CD8-positive, alpha-beta T cell (primary cell): ENCODE measurements at regions of chr17 and their contacts with region 1.

Region 1: GRCh38 chr17:8785547-8786413 is 13.4 kb downstream of the MFSD6L start:
- DNase-seq: peak; percentile 27 to 73 (median 60)
- ATAC-seq: peak; percentile 56
- H3K4me3 ChIP-seq: no peak overlapping the region
- H3K4me3 Mint-ChIP-seq: no peak overlapping the region
- H3K27ac ChIP-seq: no peak overlapping the region
- H3K27ac Mint-ChIP-seq: no peak overlapping the region
- H3K4me1 ChIP-seq: no peaks in the 10 kb centered on the region
- H3K4me1 Mint-ChIP-seq: no peaks in the 10 kb centered on the region
- H3K27me3 ChIP-seq: peaks cover 0 to 2% of the 10 kb centered on the region in 2 experiments
- H3K27me3 Mint-ChIP-seq: no peaks in the 10 kb centered on the region
- CTCF ChIP-seq: peak; percentile 83

Region 2: DNA sequence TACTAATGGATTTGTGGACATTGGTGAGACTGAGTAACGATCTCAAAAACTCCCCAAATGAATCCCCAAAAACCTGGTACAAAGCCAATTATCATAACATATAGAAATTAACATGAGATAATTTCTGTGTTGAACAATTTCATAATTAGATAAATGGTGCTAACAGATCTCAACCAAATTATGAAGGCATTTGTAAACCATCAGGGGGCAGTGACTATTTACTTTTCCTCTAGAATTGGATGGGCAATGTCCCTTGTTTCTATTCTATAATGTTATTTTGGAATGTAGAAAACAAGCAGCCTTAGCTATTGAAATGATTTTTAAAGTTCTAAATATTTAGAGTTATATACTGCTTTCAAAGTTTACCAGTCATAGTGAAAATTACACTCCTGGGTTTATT is 213.0 kb before region 1 on chr17:
- CTCF ChIA-PET with region 1: interaction called, 3 read pairs
- POLR2A ChIA-PET with region 1: no interaction called
- intact Hi-C with region 1: loop called in 1 of 2 experiments (anchors 10 kb)
- DNase-seq: peak in 2 of 9 experiments; percentile 3 to 20
- ATAC-seq: no peak
- H3K4me3 ChIP-seq: no peak overlapping the region
- H3K4me3 Mint-ChIP-seq: no peak overlapping the region
- H3K27ac ChIP-seq: no peak overlapping the region
- H3K27ac Mint-ChIP-seq: no peak overlapping the region
- H3K4me1 ChIP-seq: no peaks in the 10 kb centered on the region
- H3K4me1 Mint-ChIP-seq: no peaks in the 10 kb centered on the region
- H3K27me3 ChIP-seq: no peaks in the 10 kb centered on the region
- H3K27me3 Mint-ChIP-seq: peaks cover 3% of the 10 kb centered on the region
- CTCF ChIP-seq: no peak

Region 3: GRCh38 chr17:8727065-8727511 is 58.7 kb before region 1 on chr17:
- CTCF ChIA-PET with region 1: no interaction called
- POLR2A ChIA-PET with region 1: no interaction called
- intact Hi-C with region 1: no loop called
- DNase-seq: no peak
- ATAC-seq: no peak
- H3K4me3 ChIP-seq: no peak overlapping the region
- H3K4me3 Mint-ChIP-seq: no peak overlapping the region
- H3K27ac ChIP-seq: no peak overlapping the region
- H3K27ac Mint-ChIP-seq: no peak overlapping the region
- H3K4me1 ChIP-seq: no peaks in the 10 kb centered on the region
- H3K4me1 Mint-ChIP-seq: no peaks in the 10 kb centered on the region
- H3K27me3 ChIP-seq: no peaks in the 10 kb centered on the region
- H3K27me3 Mint-ChIP-seq: peaks cover 8% of the 10 kb centered on the region
- CTCF ChIP-seq: no peak

Region 4: DNA sequence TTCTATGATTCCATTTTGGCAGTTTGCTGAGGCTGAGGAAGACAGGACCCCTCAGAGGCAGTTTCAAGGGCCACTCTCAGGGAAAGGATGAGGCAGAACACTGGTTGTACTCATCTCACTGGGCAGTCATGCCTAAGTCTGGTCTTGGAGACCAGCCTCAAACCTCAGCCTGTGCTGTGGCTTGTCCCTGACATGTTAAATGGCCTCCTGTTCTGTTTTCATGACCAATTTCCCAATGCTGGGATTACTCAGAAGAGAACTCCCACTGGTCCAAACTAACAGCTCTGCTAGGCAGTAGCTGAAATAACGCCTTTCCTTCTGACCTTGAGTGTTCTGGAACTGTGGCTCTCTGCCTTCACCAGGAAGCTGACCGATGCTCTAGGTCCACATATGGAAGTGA is 19.0 kb before region 1 on chr17:
- CTCF ChIA-PET with region 1: interaction called, 15 read pairs
- POLR2A ChIA-PET with region 1: no interaction called
- intact Hi-C with region 1: no loop called
- DNase-seq: no peak
- ATAC-seq: no peak
- H3K4me3 ChIP-seq: no peak overlapping the region
- H3K4me3 Mint-ChIP-seq: no peak overlapping the region
- H3K27ac ChIP-seq: no peak overlapping the region
- H3K27ac Mint-ChIP-seq: no peak overlapping the region
- H3K4me1 ChIP-seq: no peaks in the 10 kb centered on the region
- H3K4me1 Mint-ChIP-seq: no peaks in the 10 kb centered on the region
- H3K27me3 ChIP-seq: peaks cover 0 to 5% of the 10 kb centered on the region in 2 experiments
- H3K27me3 Mint-ChIP-seq: peaks cover 2% of the 10 kb centered on the region
- CTCF ChIP-seq: no peak

Region 5: GRCh38 chr17:8806926-8807550 is 21.3 kb after region 1 on chr17:
- CTCF ChIA-PET with region 1: interaction called, 12 read pairs
- POLR2A ChIA-PET with region 1: no interaction called
- intact Hi-C with region 1: no loop called
- DNase-seq: peak in 1 of 9 experiments; percentile 45
- ATAC-seq: peak; percentile 31
- H3K4me3 ChIP-seq: no peak overlapping the region
- H3K4me3 Mint-ChIP-seq: no peak overlapping the region
- H3K27ac ChIP-seq: no peak overlapping the region
- H3K27ac Mint-ChIP-seq: no peak overlapping the region
- H3K4me1 ChIP-seq: no peaks in the 10 kb centered on the region
- H3K4me1 Mint-ChIP-seq: peaks cover 7% of the 10 kb centered on the region
- H3K27me3 ChIP-seq: no peaks in the 10 kb centered on the region
- H3K27me3 Mint-ChIP-seq: no peaks in the 10 kb centered on the region
- CTCF ChIP-seq: no peak